Naive thymus-derived CD8-positive, alpha-beta T cell (primary cell): ENCODE measurements at regions of chr19 and their contacts with region 1.

Region 1: DNA sequence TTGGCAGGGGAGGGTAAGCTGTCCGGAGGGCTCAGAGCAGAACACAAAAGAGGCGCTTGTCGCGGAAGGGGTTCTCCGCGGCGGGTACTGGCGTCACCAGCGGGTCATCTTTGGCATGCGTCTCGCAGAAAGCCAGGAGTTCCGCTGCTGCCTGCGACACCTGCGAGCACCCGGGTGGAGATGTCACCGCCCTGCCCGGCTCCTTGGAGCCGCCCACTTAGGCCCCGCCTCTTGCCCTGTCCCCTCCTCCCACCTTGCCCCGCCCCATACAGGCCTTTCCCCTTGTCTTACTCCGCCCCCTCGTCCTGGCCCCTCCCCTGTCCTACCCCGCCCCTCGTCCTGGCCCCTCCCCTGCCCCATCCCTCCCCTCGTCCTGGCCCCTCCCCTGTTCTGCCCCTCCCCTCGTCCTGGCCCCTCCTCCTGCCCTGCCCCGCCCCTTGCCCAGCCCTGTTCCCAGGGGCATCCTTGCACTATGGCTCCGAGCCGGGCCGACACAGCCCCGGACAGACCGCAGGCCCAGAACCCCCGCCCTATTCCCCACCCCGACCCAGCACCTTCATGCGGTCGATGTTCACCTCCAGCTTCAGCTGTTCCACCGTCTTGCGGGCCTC is 1.9 kb downstream of the GNG8 start:
- DNase-seq: peak; percentile 86 to 97 (median 93)
- ATAC-seq: peak; percentile 61 to 78
- H3K4me3 Mint-ChIP-seq: peak overlapping the region in 9 of 10 donors; percentile 79 to 88 (median 85)
- H3K27ac Mint-ChIP-seq: peak overlapping the region; percentile 41 to 98 (median 91)
- H3K4me1 Mint-ChIP-seq: peaks cover 15 to 32% (median 23%) of the 10 kb centered on the region in 4 donors
- H3K27me3 Mint-ChIP-seq: peaks cover 0 to 4% (median 0%) of the 10 kb centered on the region in 5 donors

Region 2: DNA sequence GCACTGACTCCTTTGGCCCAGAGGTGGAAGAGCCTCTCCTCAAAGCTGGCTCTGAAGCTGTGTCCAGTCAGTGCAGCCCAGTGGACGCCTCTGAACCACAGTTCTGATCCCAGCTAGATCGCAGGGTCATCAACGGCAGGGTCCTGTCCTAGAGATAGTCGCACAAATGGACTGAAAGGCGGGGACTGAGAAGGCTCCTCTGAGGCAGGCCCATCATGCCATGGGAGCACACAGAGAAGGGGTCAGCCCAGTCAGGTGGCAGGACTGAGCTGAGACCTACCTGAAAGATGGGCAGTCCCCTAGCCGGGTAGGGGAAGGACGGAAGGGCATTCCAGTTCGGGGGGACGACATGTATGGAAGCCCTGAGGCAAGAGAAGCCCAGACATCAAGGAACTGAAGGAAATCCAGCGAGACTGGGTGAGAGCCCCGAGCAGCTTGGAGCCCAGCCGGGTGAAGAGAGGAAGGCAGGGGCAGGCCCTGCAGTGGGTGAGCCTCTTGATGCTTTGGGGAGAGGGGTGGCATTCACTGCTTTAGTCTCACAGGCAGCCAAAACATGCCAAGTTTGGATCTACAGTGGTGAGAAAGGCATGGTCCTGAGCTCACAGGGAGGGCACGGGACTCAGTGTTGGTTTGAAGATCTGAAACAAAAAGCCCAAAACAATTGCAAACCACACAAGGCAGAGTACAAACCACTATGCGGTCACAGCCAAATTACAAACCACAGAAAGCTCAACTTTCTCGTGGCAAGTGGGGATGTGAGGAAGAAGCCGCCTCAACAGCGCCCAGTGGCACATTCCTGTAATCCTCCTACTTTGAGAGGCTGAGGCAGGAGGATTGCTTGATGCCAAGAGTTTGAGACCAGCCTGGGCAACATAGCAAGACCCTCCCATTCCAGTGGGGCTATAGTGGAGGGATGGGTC is 23.0 kb before region 1 on chr19:
- POLR2A ChIA-PET with region 1: interaction called, 12 read pairs
- DNase-seq: peak in 6 of 10 donors; percentile 30 to 56 (median 49)
- ATAC-seq: peak; percentile 56 to 64
- H3K4me3 Mint-ChIP-seq: peak overlapping the region; percentile 60 to 84 (median 76)
- H3K27ac Mint-ChIP-seq: peak overlapping the region; percentile 89 to 97 (median 94)
- H3K4me1 Mint-ChIP-seq: peaks cover 37 to 77% (median 66%) of the 10 kb centered on the region in 4 donors
- H3K27me3 Mint-ChIP-seq: no peaks in the 10 kb centered on the region

Region 3: GRCh38 chr19:46616631-46617322 is 17.4 kb before region 1 on chr19:
- POLR2A ChIA-PET with region 1: interaction called, 25 read pairs
- DNase-seq: no peak
- ATAC-seq: no peak
- H3K4me3 Mint-ChIP-seq: peak overlapping the region; percentile 54 to 92 (median 80)
- H3K27ac Mint-ChIP-seq: peak overlapping the region; percentile 79 to 99 (median 95)
- H3K4me1 Mint-ChIP-seq: peaks cover 29 to 88% (median 74%) of the 10 kb centered on the region in 4 donors
- H3K27me3 Mint-ChIP-seq: no peaks in the 10 kb centered on the region